Activated CD4-positive, alpha-beta T cell treated with anti-CD3 and anti-CD28 coated beads for 36 hours (primary cell): ENCODE measurements at regions of chr5 and their contacts with region 1.

Region 1: DNA sequence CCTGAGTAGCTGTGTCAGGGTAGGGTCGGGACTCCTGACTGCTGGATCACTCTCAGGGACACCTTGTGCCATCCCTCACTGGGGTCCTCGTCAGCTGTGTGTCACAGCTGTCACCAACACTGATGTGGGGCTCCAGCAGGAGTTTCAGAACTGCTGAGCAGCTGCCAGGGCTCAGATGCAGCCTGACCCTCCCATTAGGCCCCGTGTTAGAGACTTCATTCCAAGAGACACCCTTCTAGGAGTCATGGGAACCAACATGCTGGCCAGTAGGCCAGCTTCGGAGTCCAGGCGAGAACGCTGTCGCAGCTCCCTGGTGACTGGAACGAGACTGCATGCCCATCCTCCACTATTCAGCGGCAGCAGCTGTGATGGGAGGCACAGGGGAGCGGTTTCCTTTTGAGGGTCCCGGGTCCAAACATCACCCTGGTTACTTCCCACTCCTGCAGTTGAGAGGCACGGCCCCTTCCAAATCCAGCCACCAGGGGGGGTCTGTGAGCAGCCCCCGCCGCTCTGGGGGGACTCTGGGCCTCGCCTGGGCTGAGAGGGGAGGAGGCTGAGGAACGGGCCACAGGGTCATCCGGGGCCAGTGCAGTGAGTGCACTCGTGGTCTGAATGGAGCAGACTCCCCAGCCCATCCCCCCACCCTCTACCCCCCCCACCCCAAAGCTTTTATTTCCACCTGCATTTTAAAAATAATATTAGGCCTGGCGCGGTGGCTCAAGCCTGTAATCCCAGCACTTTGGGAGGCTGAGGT is 12.6 kb upstream of the TCF7 start:
- DNase-seq: peak; percentile 84
- ATAC-seq: peak; percentile 11
- H3K4me3 Mint-ChIP-seq: no peak overlapping the region
- H3K27ac Mint-ChIP-seq: no peak overlapping the region
- H3K4me1 Mint-ChIP-seq: peaks cover 93% of the 10 kb centered on the region
- H3K27me3 Mint-ChIP-seq: peaks cover 2% of the 10 kb centered on the region

Region 2: DNA sequence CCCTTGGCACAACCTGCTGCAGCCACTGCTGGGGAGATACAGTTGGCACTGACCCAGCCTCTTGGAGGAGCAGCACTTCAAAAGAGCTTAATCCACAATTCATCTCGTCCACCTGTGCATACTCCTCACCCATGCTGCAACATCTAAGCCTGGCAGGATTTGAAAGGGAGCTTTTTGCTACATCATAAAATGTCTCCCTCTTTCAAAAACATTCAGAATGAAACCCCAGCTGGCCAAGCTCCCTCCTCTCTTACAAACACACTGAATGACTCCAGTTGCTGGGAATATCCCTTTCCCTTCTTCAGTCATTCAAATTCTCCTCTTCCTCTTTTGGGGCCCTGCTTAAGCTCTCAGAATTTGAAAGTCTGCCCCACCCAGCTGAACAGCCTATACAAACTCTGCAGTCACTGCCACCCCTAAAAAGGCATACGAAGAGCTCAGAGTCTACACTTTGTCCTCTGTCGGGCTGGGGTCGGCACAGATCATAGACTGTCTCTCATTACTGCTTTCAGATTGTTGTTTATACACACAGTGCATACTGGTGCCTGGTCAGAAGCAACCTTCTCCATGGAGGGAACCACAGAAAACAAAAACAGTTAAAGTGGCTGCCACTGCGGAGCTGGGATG is 124.6 kb before region 1 on chr5:
- CTCF ChIA-PET with region 1: no interaction called
- POLR2A ChIA-PET with region 1: no interaction called
- intact Hi-C with region 1: no loop called
- DNase-seq: peak; percentile 31
- ATAC-seq: peak; percentile 50
- H3K4me3 Mint-ChIP-seq: no peak overlapping the region
- H3K27ac Mint-ChIP-seq: peak overlapping the region; percentile 79
- H3K4me1 Mint-ChIP-seq: peaks cover 36% of the 10 kb centered on the region
- H3K27me3 Mint-ChIP-seq: no peaks in the 10 kb centered on the region

Region 3: DNA sequence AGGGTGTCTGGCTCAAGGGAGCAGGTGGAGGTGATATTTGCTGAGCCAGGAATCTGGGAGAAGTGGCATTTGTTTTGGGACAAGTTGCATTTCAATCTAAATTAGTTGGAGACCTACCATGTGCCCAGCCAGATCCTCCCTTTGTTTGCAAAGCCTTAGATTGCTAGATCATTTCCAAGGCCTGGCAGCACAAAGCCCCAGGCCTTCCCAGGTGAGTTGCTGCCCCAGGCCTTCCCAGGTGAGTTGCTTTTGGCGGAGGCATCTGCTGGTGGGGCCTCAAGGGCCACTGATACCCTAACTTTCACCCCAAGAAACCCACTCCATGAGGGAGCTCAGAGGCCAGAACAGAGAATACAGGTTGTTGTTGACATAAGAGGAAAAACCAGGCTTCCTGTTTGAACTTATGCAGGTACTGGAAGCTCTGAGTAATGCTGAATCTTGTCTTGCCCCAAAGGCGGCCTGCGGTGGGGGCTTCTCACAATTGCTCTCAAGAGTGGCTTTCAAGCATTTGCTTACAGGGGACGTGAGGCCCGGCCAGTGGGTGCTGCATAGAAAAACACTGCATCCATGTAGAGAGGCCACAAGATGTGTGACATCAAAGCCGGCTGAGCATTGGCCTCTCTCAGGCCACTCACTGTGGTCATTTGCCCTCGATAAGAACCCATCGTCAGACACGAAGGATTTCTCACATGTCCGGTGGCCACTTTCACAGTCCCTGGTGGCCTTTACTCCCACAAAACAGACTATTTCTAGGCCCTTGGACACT is 22.2 kb before region 1 on chr5:
- CTCF ChIA-PET with region 1: interaction called, 52 read pairs
- POLR2A ChIA-PET with region 1: interaction called, 4 read pairs
- intact Hi-C with region 1: no loop called
- DNase-seq: peak; percentile 88
- ATAC-seq: peak; percentile 79
- H3K4me3 Mint-ChIP-seq: peak overlapping the region; percentile 45
- H3K27ac Mint-ChIP-seq: peak overlapping the region; percentile 95
- H3K4me1 Mint-ChIP-seq: peaks cover 79% of the 10 kb centered on the region
- H3K27me3 Mint-ChIP-seq: no peaks in the 10 kb centered on the region

Region 4: GRCh38 chr5:134119720-134120119 is 17.9 kb after region 1 on chr5:
- CTCF ChIA-PET with region 1: interaction called, 18 read pairs
- POLR2A ChIA-PET with region 1: interaction called, 59 read pairs
- intact Hi-C with region 1: no loop called
- DNase-seq: peak; percentile 57
- ATAC-seq: peak; percentile 11
- H3K4me3 Mint-ChIP-seq: peak overlapping the region; percentile 78
- H3K27ac Mint-ChIP-seq: peak overlapping the region; percentile 86
- H3K4me1 Mint-ChIP-seq: peaks cover 79% of the 10 kb centered on the region
- H3K27me3 Mint-ChIP-seq: no peaks in the 10 kb centered on the region

Region 5: GRCh38 chr5:134132372-134133034 is 30.6 kb after region 1 on chr5:
- CTCF ChIA-PET with region 1: interaction called, 106 read pairs
- POLR2A ChIA-PET with region 1: interaction called, 3 read pairs
- intact Hi-C with region 1: no loop called
- DNase-seq: peak; percentile 86
- ATAC-seq: peak; percentile 60
- H3K4me3 Mint-ChIP-seq: peak overlapping the region; percentile 41
- H3K27ac Mint-ChIP-seq: peak overlapping the region; percentile 87
- H3K4me1 Mint-ChIP-seq: peaks cover 98% of the 10 kb centered on the region
- H3K27me3 Mint-ChIP-seq: no peaks in the 10 kb centered on the region

Region 6: DNA sequence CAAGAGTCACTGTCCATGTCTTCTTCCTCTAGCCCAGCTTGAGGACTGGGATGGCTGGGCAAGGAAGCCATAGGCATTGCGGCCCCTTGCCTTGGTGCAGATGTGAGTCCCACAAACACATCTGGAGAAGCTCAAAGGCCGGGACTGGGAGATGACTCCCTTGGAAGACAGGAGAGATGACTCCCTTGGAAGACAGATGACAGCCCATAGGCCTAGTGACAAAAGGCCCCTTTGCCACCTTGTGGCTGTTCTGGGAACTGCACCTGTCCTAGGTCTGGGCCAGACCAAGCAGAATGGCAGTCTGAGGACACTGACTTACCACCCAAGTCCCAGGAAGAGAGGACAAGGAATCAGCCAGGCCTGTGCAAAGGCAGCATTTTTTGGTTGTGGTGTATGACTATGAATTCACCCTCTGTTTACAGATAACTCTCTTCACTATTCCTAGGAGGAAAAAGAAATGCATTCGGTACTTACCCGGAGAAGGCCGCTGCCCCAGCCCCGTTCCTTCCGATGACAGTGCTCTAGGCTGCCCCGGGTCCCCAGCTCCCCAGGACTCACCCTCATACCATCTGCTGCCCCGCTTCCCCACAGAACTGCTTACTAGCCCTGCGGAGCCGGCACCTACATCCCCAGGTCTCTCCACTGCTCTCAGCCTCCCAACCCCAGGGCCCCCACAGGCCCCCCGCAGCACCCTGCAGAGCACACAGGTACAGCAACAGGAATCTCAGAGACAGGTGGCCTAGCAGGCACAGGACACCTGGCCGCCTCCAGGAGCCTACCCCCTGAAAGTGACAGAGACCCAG is 44.1 kb after region 1 on chr5:
- CTCF ChIA-PET with region 1: interaction called, 106 read pairs
- POLR2A ChIA-PET with region 1: no interaction called
- intact Hi-C with region 1: no loop called
- DNase-seq: peak; percentile 91
- ATAC-seq: peak; percentile 81
- H3K4me3 Mint-ChIP-seq: no peak overlapping the region
- H3K27ac Mint-ChIP-seq: peak overlapping the region; percentile 44
- H3K4me1 Mint-ChIP-seq: peaks cover 43% of the 10 kb centered on the region
- H3K27me3 Mint-ChIP-seq: no peaks in the 10 kb centered on the region